Activated T-helper 2 cell treated with anti-CD3 and anti-CD28 coated beads, Interferon-gamma antibody, Interleukin-2, Interleukin-4, amounts not matched to agents 10 μg/mL and 5 μg/mL and 100 μg/mL, durations not matched to agents 14 hours and 24 hours and 36 hours (primary cell): ENCODE measurements at regions of chr3 and their contacts with region 1.

Region 1: GRCh38 chr3:151227807-151228665 is 25.0 kb upstream of the GPR171 start:
- DNase-seq: peak; percentile 71
- H3K4me3 Mint-ChIP-seq: no peak overlapping the region
- H3K27ac Mint-ChIP-seq: peak overlapping the region; percentile 83
- H3K4me1 Mint-ChIP-seq: peaks cover 59% of the 10 kb centered on the region
- H3K27me3 Mint-ChIP-seq: no peaks in the 10 kb centered on the region

Region 2: GRCh38 chr3:151168269-151169094 is 59.6 kb before region 1 on chr3:
- intact Hi-C with region 1: loop called (anchors 1 kb)
- DNase-seq: peak; percentile 61
- H3K4me3 Mint-ChIP-seq: no peak overlapping the region
- H3K27ac Mint-ChIP-seq: no peak overlapping the region
- H3K4me1 Mint-ChIP-seq: peaks cover 43% of the 10 kb centered on the region
- H3K27me3 Mint-ChIP-seq: no peaks in the 10 kb centered on the region

Region 3: GRCh38 chr3:151210676-151211381 is 17.2 kb before region 1 on chr3:
- intact Hi-C with region 1: loop called (anchors 1 kb)
- DNase-seq: no peak
- H3K4me3 Mint-ChIP-seq: peak overlapping the region; percentile 47
- H3K27ac Mint-ChIP-seq: peak overlapping the region; percentile 75
- H3K4me1 Mint-ChIP-seq: peaks cover 53% of the 10 kb centered on the region
- H3K27me3 Mint-ChIP-seq: no peaks in the 10 kb centered on the region

Region 4: DNA sequence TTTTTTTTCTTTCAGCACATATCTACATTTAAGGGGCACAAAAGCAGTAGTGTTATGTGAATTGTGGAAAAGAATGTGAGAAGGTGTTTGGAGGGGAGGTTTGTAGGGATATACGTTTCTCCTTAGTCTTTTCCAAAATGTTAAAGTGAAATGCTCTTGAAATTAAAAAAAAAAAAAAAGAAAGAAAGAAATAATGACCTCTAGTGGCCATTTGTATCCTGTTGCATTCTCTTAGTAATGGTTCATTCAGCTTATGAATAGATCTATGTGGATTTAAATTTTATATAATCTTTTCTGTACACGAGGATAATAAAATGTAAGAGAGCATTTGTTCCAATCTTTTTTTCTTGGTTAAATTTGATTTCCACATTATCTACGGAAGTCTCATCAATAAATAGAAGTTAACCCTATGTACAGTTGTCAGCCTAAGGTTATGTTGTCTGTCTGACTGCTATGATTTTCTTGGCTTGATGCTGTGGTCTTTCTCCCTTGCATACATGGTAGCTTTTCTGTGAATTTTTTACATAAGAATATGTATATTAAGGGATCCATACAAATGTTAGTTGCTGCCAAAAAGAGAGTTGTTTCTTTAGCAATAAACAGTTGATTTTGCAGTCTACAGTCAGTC is 99.6 kb after region 1 on chr3:
- intact Hi-C with region 1: loop called (anchors 5 kb)
- DNase-seq: no peak
- H3K4me3 Mint-ChIP-seq: no peak overlapping the region
- H3K27ac Mint-ChIP-seq: no peak overlapping the region
- H3K4me1 Mint-ChIP-seq: peaks cover 22% of the 10 kb centered on the region
- H3K27me3 Mint-ChIP-seq: no peaks in the 10 kb centered on the region

Region 5: GRCh38 chr3:151918253-151919029 is 690.4 kb after region 1 on chr3:
- intact Hi-C with region 1: loop called (anchors 5 kb)
- DNase-seq: no peak
- H3K4me3 Mint-ChIP-seq: no peak overlapping the region
- H3K27ac Mint-ChIP-seq: no peak overlapping the region
- H3K4me1 Mint-ChIP-seq: peaks cover 2% of the 10 kb centered on the region
- H3K27me3 Mint-ChIP-seq: peaks cover 17% of the 10 kb centered on the region